Common myeloid progenitor, CD34-positive (primary cell): ENCODE measurements at regions of chr18 and their contacts with region 1.

Region 1: DNA sequence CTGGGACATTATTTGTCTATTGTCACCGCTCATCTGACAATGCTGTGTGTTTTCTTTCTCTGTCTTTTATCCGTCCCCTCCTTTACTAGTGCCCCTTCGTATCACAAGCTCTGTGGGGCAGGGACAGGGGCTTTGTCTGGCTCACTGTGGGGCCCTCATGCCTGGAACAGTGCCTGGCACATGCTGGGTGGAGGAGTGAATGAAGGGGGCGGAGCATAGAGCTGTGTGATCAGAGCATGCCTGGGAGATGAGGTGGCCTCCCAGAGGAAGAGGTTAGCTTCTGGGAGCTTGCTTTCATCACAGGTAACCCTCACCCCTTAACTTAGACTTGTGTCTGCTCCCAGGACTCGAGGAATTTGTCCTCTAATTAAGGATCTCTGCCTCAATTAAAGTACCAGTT is 16.4 kb downstream of the MTCL1 start:
- DNase-seq: no peak
- H3K4me3 ChIP-seq: no peak overlapping the region
- H3K27ac ChIP-seq: no peak overlapping the region
- H3K4me1 ChIP-seq: no peaks in the 10 kb centered on the region
- H3K27me3 ChIP-seq: peaks cover 0 to 8% (median 0%) of the 10 kb centered on the region in 5 experiments

Region 2: GRCh38 chr18:8623549-8624106 is 98.1 kb before region 1 on chr18:
- CTCF ChIA-PET with region 1: no interaction called
- POLR2A ChIA-PET with region 1: no interaction called
- DNase-seq: peak in 2 of 3 donors; percentile 54 to 67
- H3K4me3 ChIP-seq: peak overlapping the region in 5 of 7 experiments; percentile 8 to 70 (median 56)
- H3K27ac ChIP-seq: peak overlapping the region in 1 of 2 experiments; percentile 50
- H3K4me1 ChIP-seq: peaks cover 3 to 13% (median 9%) of the 10 kb centered on the region in 4 experiments
- H3K27me3 ChIP-seq: no peaks in the 10 kb centered on the region

Region 3: DNA sequence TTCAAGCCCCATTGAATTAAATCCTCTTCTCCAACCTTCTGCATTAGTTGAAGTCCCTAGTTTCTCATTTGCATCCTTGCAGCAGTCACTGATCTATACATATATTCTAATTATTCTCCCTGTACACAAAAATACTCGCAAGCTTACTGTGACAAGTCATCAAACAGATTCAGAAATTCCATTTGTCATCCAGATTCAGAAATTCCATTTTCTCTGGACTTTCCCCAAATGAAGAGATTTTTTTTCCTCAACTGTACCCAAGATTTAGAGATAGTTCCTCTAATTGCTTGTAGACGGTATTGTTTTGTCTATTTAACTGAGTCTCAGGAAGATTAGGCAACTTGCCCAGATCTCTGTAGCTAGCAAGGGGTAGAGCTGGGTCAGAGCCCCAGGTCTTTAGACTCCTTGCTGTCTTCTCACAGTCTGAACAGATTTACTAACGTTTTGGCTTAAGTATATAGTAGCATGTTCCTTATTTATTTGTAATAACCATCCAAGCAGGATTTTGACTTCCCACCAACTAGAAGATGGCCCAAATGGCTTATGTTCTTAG is 78.3 kb before region 1 on chr18:
- CTCF ChIA-PET with region 1: no interaction called
- POLR2A ChIA-PET with region 1: no interaction called
- DNase-seq: no peak
- H3K4me3 ChIP-seq: no peak overlapping the region
- H3K27ac ChIP-seq: no peak overlapping the region
- H3K4me1 ChIP-seq: no peaks in the 10 kb centered on the region
- H3K27me3 ChIP-seq: no peaks in the 10 kb centered on the region

Region 4: GRCh38 chr18:8685141-8685913 is 36.4 kb before region 1 on chr18:
- CTCF ChIA-PET with region 1: no interaction called
- POLR2A ChIA-PET with region 1: no interaction called
- DNase-seq: no peak
- H3K4me3 ChIP-seq: no peak overlapping the region
- H3K27ac ChIP-seq: no peak overlapping the region
- H3K4me1 ChIP-seq: no peaks in the 10 kb centered on the region
- H3K27me3 ChIP-seq: peaks cover 0 to 3% (median 0%) of the 10 kb centered on the region in 5 experiments

Region 5: DNA sequence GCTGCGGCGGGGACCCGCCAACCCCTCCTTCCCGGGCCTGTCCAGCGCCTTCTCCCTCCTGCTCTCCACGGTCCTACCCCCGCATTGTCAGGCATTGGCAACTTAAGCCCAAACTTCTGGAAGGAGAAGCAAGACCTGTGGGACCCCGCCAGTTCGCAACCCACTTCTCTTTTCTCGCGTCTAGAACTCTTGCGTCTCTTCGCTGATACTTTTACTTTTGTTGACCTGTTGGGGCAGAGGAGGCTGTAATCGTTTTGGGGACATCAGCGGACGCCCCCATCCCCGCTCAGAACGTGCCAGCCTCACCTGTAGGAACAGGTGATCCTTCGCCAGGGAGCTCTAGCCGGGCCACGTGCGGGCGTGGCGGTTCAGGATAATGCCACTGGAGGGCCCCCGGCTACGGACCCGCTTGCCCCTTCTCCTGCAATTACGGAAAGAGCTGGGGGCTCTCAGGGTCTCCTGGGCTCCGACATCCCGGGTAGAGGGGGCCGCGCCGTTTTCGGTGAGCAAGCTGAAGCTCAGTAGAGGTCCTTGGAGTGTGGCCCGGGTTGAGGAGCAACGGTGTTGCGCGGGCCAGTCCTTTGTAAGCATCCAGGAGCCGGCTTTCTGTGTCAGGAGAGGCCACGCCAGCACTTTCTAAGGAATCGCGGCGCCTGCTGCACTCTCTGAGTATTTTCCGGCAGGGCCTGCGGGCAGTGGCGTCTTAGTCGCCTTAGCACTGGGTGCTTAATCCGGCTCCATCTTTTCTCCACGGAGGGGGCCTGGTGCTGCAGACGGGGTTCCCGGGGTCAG is 14.8 kb before region 1 on chr18:
- CTCF ChIA-PET with region 1: interaction called, 12 read pairs
- POLR2A ChIA-PET with region 1: interaction called, 6 read pairs
- DNase-seq: peak; percentile 14 to 68 (median 67)
- H3K4me3 ChIP-seq: peak overlapping the region in 6 of 7 experiments; percentile 10 to 83 (median 54)
- H3K27ac ChIP-seq: no peak overlapping the region
- H3K4me1 ChIP-seq: peaks cover 0 to 35% (median 29%) of the 10 kb centered on the region in 4 experiments
- H3K27me3 ChIP-seq: peaks cover 3 to 65% (median 29%) of the 10 kb centered on the region in 5 experiments